IMR-90 (cell line): ENCODE measurements at regions of chr12 and their contacts with region 1.

Region 1: GRCh38 chr12:95336390-95337067 is 118.9 kb downstream of the VEZT start:
- DNase-seq: peak; percentile 85
- ATAC-seq: peak; percentile 78
- H3K4me3 ChIP-seq: peak overlapping the region; percentile 24; the same call in 1 of the 2 replicates
- H3K27ac ChIP-seq: peak overlapping the region; percentile 60
- H3K4me1 ChIP-seq: peaks cover 8% of the 10 kb centered on the region
- H3K27me3 ChIP-seq: no peaks in the 10 kb centered on the region
- CTCF ChIP-seq: peak; percentile 97
- POLR2A ChIP-seq: 0 out of 2 replicates have a peak, but pooled peaks have one; percentile 42
- RAD21 ChIP-seq: peak; percentile 94

Region 2: DNA sequence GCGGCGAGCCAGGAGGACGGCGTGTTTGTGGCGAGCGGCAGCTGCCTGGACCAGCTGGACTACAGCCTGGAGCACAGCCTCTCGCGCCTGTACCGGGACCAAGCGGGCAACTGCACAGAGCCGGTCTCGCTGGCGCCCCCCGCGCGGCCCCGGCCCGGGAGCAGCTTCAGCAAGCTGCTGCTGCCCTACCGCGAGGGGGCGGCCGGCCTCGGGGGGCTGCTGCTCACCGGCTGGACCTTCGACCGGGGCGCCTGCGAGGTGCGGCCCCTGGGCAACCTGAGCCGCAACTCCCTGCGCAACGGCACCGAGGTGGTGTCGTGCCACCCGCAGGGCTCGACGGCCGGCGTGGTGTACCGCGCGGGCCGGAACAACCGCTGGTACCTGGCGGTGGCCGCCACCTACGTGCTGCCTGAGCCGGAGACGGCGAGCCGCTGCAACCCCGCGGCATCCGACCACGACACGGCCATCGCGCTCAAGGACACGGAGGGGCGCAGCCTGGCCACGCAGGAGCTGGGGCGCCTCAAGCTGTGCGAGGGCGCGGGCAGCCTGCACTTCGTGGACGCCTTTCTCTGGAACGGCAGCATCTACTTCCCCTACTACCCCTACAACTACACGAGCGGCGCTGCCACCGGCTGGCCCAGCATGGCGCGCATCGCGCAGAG is 1187.3 kb before region 1 on chr12:
- CTCF ChIA-PET with region 1: no interaction called
- POLR2A ChIA-PET with region 1: no interaction called
- dilution Hi-C with region 1: no loop called
- in situ Hi-C with region 1: loop called (anchors 25 kb)
- intact Hi-C with region 1: loop called (anchors 5 kb)
- DNase-seq: peak; percentile 23
- ATAC-seq: peak; percentile 64
- H3K4me3 ChIP-seq: peak overlapping the region; percentile 67
- H3K27ac ChIP-seq: no peak overlapping the region
- H3K4me1 ChIP-seq: no peaks in the 10 kb centered on the region; the same call in none of the 2 replicates
- H3K27me3 ChIP-seq: peaks cover 88% of the 10 kb centered on the region
- CTCF ChIP-seq: 0 out of 2 replicates have a peak, but pooled peaks have one; percentile 18
- POLR2A ChIP-seq: no peak
- RAD21 ChIP-seq: no peak

Region 3: DNA sequence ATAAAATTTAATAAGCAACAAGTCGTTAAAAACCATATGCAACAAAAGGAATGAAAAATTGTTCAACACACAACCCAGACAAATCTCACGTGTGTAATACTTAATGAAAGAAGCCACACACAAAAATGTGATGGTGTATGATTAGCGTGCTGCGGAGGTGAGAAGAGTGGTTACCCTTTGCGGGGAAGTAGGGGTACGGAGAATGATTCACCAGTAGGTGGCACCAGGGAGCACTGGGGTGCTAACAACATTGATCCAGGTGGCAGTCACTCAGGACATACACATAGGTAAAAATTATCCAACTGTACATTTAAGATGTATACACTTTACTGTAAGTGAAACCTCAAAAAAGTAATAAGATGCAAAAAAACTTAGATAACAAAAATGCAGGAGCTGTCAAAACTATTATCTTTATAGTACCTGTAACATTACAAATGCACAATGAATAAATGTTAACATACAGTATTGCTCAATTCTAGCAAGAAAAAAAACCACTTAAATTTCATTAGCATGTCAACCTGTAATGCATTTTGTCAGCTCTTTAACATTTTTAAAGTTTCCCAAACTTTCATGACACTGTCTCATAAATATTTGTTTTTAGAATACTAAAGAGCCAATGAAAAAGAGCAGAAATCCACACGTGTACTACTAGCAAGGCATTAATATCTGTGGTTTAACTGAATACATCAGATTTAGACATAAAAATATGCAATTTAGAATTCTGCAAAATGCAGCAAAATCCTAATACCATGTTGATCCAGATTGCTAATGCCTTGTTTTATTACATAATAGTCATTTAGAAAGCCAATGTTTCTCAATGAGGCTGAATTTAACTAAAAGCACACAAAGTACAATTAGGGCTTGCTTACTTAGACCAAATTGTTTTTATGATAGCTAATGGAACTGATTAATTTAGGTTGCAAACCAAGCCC is 732.8 kb before region 1 on chr12:
- CTCF ChIA-PET with region 1: no interaction called
- POLR2A ChIA-PET with region 1: no interaction called
- dilution Hi-C with region 1: no loop called
- in situ Hi-C with region 1: no loop called
- intact Hi-C with region 1: loop called (anchors 5 kb)
- DNase-seq: no peak
- ATAC-seq: no peak
- H3K4me3 ChIP-seq: no peak overlapping the region
- H3K27ac ChIP-seq: no peak overlapping the region
- H3K4me1 ChIP-seq: no peaks in the 10 kb centered on the region
- H3K27me3 ChIP-seq: peaks cover 9% of the 10 kb centered on the region
- CTCF ChIP-seq: peak; percentile 48
- POLR2A ChIP-seq: no peak
- RAD21 ChIP-seq: peak; percentile 39

Region 4: GRCh38 chr12:94762259-94762942 is 574.1 kb before region 1 on chr12:
- CTCF ChIA-PET with region 1: no interaction called
- POLR2A ChIA-PET with region 1: no interaction called
- dilution Hi-C with region 1: no loop called
- in situ Hi-C with region 1: no loop called
- intact Hi-C with region 1: loop called (anchors 10 kb)
- DNase-seq: no peak
- ATAC-seq: no peak
- H3K4me3 ChIP-seq: no peak overlapping the region
- H3K27ac ChIP-seq: no peak overlapping the region
- H3K4me1 ChIP-seq: no peaks in the 10 kb centered on the region
- H3K27me3 ChIP-seq: peaks cover 5% of the 10 kb centered on the region
- CTCF ChIP-seq: no peak
- POLR2A ChIP-seq: no peak
- RAD21 ChIP-seq: no peak

Region 5: DNA sequence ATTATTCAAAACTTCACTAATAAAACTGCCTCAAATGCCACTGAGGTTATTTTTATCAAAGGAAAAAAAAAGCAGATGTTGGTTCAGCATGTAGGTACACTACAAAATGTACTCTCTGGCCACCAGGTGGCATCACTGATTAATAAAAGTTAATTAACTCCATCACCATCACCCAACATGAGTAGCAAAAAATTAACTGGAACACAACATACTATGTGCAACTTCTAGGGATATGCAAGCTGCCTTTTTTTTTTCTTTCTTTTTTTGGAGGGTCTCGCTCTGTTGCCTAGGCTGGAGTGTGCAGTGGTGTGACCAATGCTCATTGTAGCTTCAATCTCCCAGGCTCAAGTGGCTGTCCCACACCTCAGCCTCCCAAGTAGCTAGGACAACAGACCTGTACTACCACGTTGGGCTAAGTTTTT is 219.3 kb before region 1 on chr12:
- CTCF ChIA-PET with region 1: interaction called, 16 read pairs
- POLR2A ChIA-PET with region 1: no interaction called
- dilution Hi-C with region 1: no loop called
- in situ Hi-C with region 1: loop called (anchors 5 kb)
- intact Hi-C with region 1: loop called (anchors 1 kb)
- DNase-seq: peak; percentile 75
- ATAC-seq: peak; percentile 72
- H3K4me3 ChIP-seq: no peak overlapping the region
- H3K27ac ChIP-seq: no peak overlapping the region
- H3K4me1 ChIP-seq: peaks cover 15% of the 10 kb centered on the region
- H3K27me3 ChIP-seq: no peaks in the 10 kb centered on the region
- CTCF ChIP-seq: peak; percentile 78
- POLR2A ChIP-seq: no peak
- RAD21 ChIP-seq: peak; percentile 80

Region 6: DNA sequence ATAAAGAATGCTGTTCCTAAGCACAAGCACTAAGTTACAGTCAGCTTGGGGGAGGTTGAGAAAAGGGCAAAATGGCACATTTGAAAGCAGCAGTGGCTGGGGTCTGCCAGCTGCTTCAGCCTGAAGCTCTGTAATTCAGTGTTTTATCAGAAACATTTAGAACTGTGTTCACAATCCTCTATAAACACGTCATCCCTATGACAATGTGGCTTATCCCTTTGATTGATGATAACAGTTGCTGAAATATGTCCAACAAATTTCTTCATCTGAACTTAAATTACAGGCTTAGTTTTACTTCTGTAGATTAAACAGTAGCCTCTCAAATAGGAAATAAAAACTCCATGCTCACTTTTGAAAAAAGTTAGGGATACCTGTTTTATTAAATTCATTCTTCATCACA is 10.1 kb before region 1 on chr12:
- CTCF ChIA-PET with region 1: no interaction called
- POLR2A ChIA-PET with region 1: no interaction called
- dilution Hi-C with region 1: no loop called
- in situ Hi-C with region 1: no loop called
- intact Hi-C with region 1: no loop called
- DNase-seq: peak; percentile 77
- ATAC-seq: peak; percentile 66
- H3K4me3 ChIP-seq: no peak overlapping the region
- H3K27ac ChIP-seq: peak overlapping the region; percentile 32; the same call in 1 of the 2 replicates
- H3K4me1 ChIP-seq: peaks cover 6% of the 10 kb centered on the region
- H3K27me3 ChIP-seq: no peaks in the 10 kb centered on the region
- CTCF ChIP-seq: no peak
- POLR2A ChIP-seq: no peak
- RAD21 ChIP-seq: no peak

Region 7: GRCh38 chr12:95385246-95386035 is 48.9 kb after region 1 on chr12:
- CTCF ChIA-PET with region 1: no interaction called
- POLR2A ChIA-PET with region 1: no interaction called
- dilution Hi-C with region 1: no loop called
- in situ Hi-C with region 1: no loop called
- intact Hi-C with region 1: no loop called
- DNase-seq: peak; percentile 19
- ATAC-seq: peak; percentile 80
- H3K4me3 ChIP-seq: 0 out of 2 replicates have a peak overlapping the region, but pooled peaks have one; percentile 19
- H3K27ac ChIP-seq: peak overlapping the region; percentile 24; the same call in 1 of the 2 replicates
- H3K4me1 ChIP-seq: peaks cover 2% of the 10 kb centered on the region; the same call in 1 of the 2 replicates
- H3K27me3 ChIP-seq: no peaks in the 10 kb centered on the region; the same call in 1 of the 2 replicates
- CTCF ChIP-seq: no peak
- POLR2A ChIP-seq: no peak
- RAD21 ChIP-seq: no peak

Region 8: GRCh38 chr12:95473884-95474659 is 137.5 kb after region 1 on chr12 and contains the start of gene METAP2:
- CTCF ChIA-PET with region 1: interaction called, 3 read pairs
- POLR2A ChIA-PET with region 1: no interaction called
- dilution Hi-C with region 1: no loop called
- in situ Hi-C with region 1: no loop called
- intact Hi-C with region 1: loop called (anchors 5 kb)
- DNase-seq: peak; percentile 95
- ATAC-seq: peak; percentile 98
- H3K4me3 ChIP-seq: peak within 1 kb of the TSS; percentile 84
- H3K27ac ChIP-seq: peak within 1 kb of the TSS; percentile 89
- H3K4me1 ChIP-seq: no peaks in the 10 kb centered on the region
- H3K27me3 ChIP-seq: no peaks in the 10 kb centered on the region
- CTCF ChIP-seq: no peak
- POLR2A ChIP-seq: peak; percentile 98
- RAD21 ChIP-seq: no peak
- total RNA-seq, gene METAP2: 72.9 and 108 TPM in 2 replicates

Region 9: DNA sequence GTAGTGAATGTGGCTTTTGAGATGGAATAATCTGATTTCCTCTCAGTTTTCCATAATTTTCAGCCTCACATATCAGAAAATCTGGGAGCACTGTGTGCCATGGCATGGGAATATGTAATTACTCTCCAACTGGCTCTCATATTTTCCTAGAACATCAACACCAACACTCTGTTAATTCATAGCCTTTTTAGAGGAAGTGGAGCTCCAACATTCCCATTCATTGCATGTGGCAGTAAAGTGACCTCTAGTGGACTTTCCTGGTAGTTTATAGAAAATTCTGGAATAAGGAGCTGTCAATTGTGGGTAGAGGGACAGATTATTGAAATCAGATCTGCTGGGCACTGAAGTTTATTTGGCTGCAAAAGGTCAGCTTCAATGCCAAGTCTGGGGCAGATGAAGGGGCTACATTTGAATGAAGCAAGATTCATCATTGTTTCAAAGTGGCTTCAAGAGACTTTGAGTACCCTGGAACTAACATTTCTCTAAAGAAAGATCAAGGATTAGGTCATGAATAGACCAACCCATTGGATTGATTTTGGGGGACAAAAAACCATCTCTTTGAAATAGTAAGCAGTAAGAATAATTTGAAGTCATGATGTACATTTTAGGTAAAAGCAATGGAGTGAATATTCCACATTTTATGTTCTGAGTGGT is 238.4 kb after region 1 on chr12:
- CTCF ChIA-PET with region 1: interaction called, 3 read pairs
- POLR2A ChIA-PET with region 1: no interaction called
- dilution Hi-C with region 1: no loop called
- in situ Hi-C with region 1: no loop called
- intact Hi-C with region 1: loop called (anchors 5 kb)
- DNase-seq: peak; percentile 64
- ATAC-seq: peak; percentile 78
- H3K4me3 ChIP-seq: no peak overlapping the region
- H3K27ac ChIP-seq: no peak overlapping the region
- H3K4me1 ChIP-seq: peaks cover 4% of the 10 kb centered on the region
- H3K27me3 ChIP-seq: no peaks in the 10 kb centered on the region
- CTCF ChIP-seq: peak; percentile 76
- POLR2A ChIP-seq: no peak
- RAD21 ChIP-seq: peak; percentile 69